MCF 10A (cell line): ENCODE measurements at regions of chr22 and their contacts with region 1.

Region 1: GRCh38 chr22:46006379-46007002 is 29.5 kb upstream of the WNT7B start:
- DNase-seq: peak; percentile 91
- H3K4me3 Mint-ChIP-seq: peak overlapping the region; percentile 54
- H3K27ac Mint-ChIP-seq: peak overlapping the region; percentile 91
- H3K4me1 Mint-ChIP-seq: peaks cover 16% of the 10 kb centered on the region
- H3K27me3 Mint-ChIP-seq: no peaks in the 10 kb centered on the region
- CTCF ChIP-seq: peak; percentile 79

Region 2: DNA sequence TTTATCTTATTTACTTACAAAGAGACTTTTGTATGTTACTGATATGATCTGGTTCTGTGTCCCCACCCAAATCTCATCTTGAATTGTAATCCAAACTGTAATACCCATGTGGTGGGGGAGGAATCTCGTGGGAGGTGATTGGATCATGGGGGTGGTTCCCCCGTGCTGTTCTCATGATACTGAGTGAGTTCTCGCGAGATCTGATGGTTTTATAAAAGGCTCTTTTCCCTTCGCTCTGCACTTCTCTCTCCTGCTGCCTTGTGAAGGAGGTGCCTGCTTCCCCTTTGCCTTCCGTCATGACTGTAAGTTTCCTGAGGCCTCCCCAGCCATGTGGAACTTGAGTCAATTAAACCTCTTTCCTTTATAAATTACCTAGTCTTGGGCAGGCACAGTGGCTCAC is 12.9 kb after region 1 on chr22:
- CTCF ChIA-PET with region 1: interaction called, 22 read pairs
- POLR2A ChIA-PET with region 1: interaction called, 13 read pairs
- intact Hi-C with region 1: no loop called
- DNase-seq: no peak
- H3K4me3 Mint-ChIP-seq: no peak overlapping the region
- H3K27ac Mint-ChIP-seq: no peak overlapping the region
- H3K4me1 Mint-ChIP-seq: peaks cover 11% of the 10 kb centered on the region
- H3K27me3 Mint-ChIP-seq: peaks cover 11% of the 10 kb centered on the region
- CTCF ChIP-seq: no peak

Region 3: GRCh38 chr22:46057762-46058420 is 51.4 kb after region 1 on chr22:
- CTCF ChIA-PET with region 1: interaction called, 47 read pairs
- POLR2A ChIA-PET with region 1: interaction called, 533 read pairs
- intact Hi-C with region 1: no loop called
- DNase-seq: peak; percentile 87
- H3K4me3 Mint-ChIP-seq: peak overlapping the region; percentile 81
- H3K27ac Mint-ChIP-seq: peak overlapping the region; percentile 98
- H3K4me1 Mint-ChIP-seq: peaks cover 33% of the 10 kb centered on the region
- H3K27me3 Mint-ChIP-seq: no peaks in the 10 kb centered on the region
- CTCF ChIP-seq: no peak

Region 4: GRCh38 chr22:46087336-46088277 is 81.1 kb after region 1 on chr22:
- CTCF ChIA-PET with region 1: interaction called, 14 read pairs
- POLR2A ChIA-PET with region 1: interaction called, 193 read pairs
- intact Hi-C with region 1: loop called (anchors 1 kb)
- DNase-seq: peak; percentile 84
- H3K4me3 Mint-ChIP-seq: peak overlapping the region; percentile 96
- H3K27ac Mint-ChIP-seq: peak overlapping the region; percentile 100
- H3K4me1 Mint-ChIP-seq: peaks cover 40% of the 10 kb centered on the region
- H3K27me3 Mint-ChIP-seq: no peaks in the 10 kb centered on the region
- CTCF ChIP-seq: no peak

Region 5: GRCh38 chr22:46122511-46122971 is 116.0 kb after region 1 on chr22:
- CTCF ChIA-PET with region 1: interaction called, 33 read pairs
- POLR2A ChIA-PET with region 1: interaction called, 24 read pairs
- intact Hi-C with region 1: no loop called
- DNase-seq: peak; percentile 69
- H3K4me3 Mint-ChIP-seq: no peak overlapping the region
- H3K27ac Mint-ChIP-seq: no peak overlapping the region
- H3K4me1 Mint-ChIP-seq: peaks cover 5% of the 10 kb centered on the region
- H3K27me3 Mint-ChIP-seq: no peaks in the 10 kb centered on the region
- CTCF ChIP-seq: peak; percentile 79

Region 6: GRCh38 chr22:46201059-46201757 is 194.7 kb after region 1 on chr22:
- CTCF ChIA-PET with region 1: no interaction called
- POLR2A ChIA-PET with region 1: no interaction called
- intact Hi-C with region 1: no loop called
- DNase-seq: no peak
- H3K4me3 Mint-ChIP-seq: no peak overlapping the region
- H3K27ac Mint-ChIP-seq: no peak overlapping the region
- H3K4me1 Mint-ChIP-seq: no peaks in the 10 kb centered on the region
- H3K27me3 Mint-ChIP-seq: no peaks in the 10 kb centered on the region
- CTCF ChIP-seq: no peak